GM10248 (cell line): ENCODE measurements at regions of chr12 and their contacts with region 1.

Region 1: DNA sequence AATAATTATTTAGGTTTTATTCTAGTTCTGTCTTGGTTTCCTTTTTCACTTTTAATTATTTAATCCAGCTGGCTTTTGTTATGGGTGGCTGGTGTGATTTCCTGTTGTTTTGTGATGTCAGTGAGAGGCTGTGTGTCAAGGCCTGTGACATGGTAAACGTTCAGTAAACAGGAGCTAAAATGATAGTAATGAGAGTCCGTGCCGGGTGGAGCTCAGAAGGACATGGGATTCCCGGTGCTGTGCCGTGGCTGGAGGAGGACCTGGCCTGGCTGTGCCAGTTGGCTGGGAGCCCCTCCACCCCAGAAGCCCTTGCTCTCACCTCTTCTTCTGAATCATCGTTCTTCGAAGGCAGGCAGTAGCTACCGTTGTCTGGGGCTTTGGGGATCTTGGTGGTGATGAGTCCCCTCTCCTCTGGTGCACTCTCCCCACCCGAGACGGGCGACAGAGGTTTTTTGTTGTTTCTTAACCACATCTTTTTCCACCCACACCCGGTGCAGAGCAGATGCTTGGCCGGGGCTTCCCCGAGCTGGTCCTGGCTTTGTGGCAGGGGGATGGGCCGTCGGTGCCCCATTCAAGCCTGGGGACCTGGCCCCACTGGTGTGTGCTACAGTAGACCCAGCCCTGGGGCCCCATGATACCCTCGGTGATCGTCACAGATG is 29.1 kb downstream of the SH2B3 start:
- DNase-seq: peak; percentile 76
- CTCF ChIP-seq: no peak

Region 2: DNA sequence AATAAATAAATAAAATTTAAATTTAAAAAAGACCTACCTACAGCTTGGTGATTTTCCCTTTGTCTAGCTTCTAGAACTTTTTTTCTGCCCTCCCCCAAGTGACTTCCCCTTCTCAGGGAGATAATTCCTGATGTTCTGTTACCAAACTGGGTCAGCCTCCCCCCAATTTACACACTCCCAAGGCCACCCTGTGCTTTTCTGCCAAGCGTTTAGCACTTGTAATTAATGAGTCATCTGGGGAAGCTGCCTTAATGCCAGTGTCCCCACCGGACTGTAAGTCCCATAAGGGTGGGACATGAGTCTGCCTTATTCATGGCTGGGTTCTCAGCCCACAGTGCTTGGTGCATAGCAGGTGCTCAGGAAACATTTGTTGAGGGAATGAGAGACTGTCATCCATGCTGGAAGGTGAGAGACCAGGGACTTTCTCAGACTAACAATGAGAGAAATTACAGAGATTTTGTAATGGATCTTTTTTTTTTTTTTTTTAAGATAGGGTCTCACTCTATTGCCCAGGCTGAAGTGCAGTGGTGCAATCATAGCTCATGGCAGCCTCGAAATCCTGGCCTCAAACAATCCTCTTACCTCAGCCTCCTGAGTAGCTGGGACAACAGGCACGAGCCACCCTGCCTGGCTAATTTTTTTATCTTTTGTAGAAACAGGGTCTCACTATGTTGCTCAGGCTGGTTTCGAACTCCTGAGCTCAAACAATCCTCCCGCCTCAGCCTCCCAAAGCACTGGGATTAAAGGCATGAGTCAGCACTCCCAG is 172.7 kb before region 1 on chr12:
- CTCF ChIA-PET with region 1: no interaction called
- POLR2A ChIA-PET with region 1: no interaction called
- DNase-seq: no peak
- CTCF ChIP-seq: no peak

Region 3: DNA sequence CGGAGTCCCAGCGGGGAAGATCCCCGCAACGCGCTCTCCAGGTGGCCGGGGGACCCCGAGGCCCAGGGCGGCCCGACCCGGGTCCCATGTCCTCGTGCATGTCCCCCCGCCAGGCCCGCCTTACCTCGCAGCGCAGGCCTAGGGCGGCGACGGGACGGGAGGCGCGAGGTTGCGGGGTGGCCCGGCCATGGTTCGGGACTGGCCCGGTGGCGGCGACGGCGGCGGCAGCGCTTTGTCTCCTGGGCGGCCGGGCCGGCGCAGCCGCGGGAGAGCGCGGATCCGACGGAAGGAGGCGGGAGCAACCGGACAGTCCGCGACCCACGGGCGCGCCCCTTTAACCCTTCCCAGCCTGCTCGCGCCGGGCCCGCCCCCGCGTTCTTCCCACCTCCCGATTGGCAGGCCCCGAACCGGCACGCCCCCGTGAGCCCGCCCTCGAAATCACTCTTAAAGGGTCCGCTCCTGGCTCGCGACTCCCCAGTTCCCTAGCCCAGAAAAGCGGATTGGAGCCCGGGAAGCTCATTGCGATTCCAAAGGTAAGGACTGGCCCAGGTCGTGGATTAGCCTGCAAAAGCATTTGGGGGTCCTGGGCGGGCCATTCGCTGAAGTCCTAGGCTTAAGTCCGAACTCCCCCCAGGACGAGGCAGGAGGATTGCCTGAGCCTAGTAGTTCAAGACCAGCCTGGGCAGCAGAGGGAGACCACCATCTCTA is 65.9 kb before region 1 on chr12 and contains the start of gene PHETA1:
- CTCF ChIA-PET with region 1: no interaction called
- POLR2A ChIA-PET with region 1: no interaction called
- DNase-seq: peak; percentile 94
- CTCF ChIP-seq: no peak

Region 4: GRCh38 chr12:111444925-111445725 is 10.3 kb after region 1 on chr12:
- CTCF ChIA-PET with region 1: interaction called, 40 read pairs
- POLR2A ChIA-PET with region 1: interaction called, 16 read pairs
- DNase-seq: peak; percentile 91
- CTCF ChIP-seq: no peak

Region 5: DNA sequence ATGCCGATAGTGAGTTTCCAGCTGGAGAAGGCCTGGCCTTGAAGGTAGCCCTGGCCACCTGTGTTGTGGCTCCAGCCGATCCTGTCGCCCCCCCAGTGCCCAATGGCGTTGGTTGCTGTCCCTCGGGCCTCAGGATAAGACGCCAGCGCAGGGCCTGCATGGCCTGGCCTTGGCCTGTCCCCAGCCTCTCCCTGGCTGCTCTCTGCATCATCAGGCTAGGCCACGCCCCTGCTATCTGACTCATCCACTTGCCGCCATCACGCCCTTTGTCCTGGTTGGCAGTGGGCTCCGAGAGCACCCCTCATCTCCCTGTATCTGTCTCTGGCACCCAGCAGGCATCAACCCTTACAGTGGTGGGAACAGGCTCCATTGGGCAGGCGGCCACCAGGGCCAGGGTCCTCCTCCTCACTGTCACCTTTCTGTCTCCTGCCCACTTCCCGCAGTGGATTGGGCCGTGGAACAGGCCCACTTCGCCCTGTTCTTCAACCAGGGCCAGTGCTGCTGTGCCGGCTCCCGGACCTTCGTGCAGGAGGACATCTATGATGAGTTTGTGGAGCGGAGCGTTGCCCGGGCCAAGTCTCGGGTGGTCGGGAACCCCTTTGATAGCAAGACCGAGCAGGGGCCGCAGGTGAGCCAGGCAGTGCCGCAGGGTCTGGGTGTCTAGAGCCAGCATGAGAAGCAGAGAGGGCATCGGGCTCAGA is 357.5 kb after region 1 on chr12:
- CTCF ChIA-PET with region 1: no interaction called
- POLR2A ChIA-PET with region 1: no interaction called
- DNase-seq: no peak
- CTCF ChIP-seq: no peak